Lower leg skin (tissue), 4 donors: ENCODE measurements at regions of chr19 and their contacts with region 1.

Region 1: GRCh38 chr19:39328046-39328705 is 7.5 kb upstream of the LRFN1 start:
- DNase-seq: peak; percentile 74 to 97
- H3K4me3 ChIP-seq: no peak overlapping the region
- CTCF ChIP-seq: peak in 1 of 3 donors; percentile 82
- POLR2A ChIP-seq: no peak

Region 2: GRCh38 chr19:38964738-38965137 is 363.4 kb before region 1 on chr19:
- intact Hi-C with region 1: loop called (anchors 5 kb)
- DNase-seq: no peak
- H3K4me3 ChIP-seq: no peak overlapping the region
- CTCF ChIP-seq: no peak
- POLR2A ChIP-seq: no peak

Region 3: DNA sequence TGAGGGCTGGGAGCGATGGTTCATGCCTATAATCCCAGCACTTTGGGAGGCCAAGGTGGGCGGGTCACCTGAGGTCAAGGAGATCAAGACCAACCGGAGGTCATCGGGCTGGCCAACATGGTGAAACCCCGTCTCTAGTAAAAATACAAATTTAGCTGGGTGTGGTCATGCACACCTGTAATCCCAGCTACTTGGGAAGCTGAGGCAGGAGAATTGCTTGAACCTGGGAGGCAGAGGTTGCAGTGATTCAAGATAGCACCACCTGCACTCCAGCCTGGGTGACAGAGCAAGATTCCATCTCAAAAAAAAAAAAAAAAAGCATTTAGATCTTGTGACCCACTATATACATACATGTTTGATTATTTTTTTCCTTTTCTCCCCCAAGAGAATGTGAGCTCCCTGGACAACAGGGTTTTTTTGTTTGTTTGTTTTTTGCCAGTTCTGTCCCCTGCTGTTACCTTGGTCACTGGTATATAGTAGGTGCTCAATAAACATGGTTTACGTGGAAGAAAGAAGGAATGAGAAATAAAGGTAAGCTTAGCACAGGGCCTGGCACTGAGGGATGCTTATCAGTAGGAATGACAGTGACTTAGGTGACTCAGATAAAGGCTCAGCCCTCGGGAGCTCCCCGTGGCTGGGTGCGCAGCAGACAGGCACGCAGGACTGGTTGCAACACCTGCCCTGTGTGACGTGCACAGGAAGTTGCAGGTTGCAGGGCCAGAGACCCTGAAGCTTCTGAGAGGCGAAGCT is 213.2 kb before region 1 on chr19:
- intact Hi-C with region 1: loop called (anchors 5 kb)
- DNase-seq: no peak
- H3K4me3 ChIP-seq: no peak overlapping the region
- CTCF ChIP-seq: no peak
- POLR2A ChIP-seq: no peak

Region 4: DNA sequence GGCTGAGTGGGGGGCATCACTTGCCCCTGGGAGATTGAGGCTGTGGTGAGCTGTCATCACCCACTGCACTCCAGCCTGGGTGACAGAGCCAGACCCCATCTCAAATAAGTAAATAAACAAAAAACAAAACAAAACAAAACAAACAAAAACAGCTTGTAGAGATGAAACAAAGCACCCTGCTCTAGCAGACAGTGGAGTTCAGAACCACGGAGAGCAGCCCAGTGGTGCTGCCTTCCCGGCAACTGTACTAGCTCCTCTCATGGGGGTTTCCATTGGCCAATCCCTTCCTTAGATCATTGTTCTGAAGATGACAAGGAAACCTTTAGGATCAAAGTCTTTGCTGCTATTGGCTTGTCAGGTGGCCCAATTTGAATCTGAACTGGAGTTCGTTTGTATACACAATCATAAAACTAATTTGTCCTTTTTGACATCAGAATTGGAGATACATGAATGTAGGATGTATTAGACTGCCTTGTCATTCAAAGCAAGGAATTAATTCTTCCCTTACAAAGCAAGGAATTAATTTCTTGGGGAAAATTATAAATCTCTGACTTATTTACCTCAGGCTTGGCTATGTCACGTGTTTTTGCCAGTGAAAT is 104.4 kb before region 1 on chr19:
- intact Hi-C with region 1: no loop called
- DNase-seq: no peak
- H3K4me3 ChIP-seq: no peak overlapping the region
- CTCF ChIP-seq: no peak
- POLR2A ChIP-seq: no peak

Region 5: GRCh38 chr19:40609561-40610395 is 1281.6 kb after region 1 on chr19:
- intact Hi-C with region 1: no loop called
- DNase-seq: peak; percentile 93 to 99
- H3K4me3 ChIP-seq: peak overlapping the region; percentile 8
- CTCF ChIP-seq: no peak
- POLR2A ChIP-seq: no peak